Mammary epithelial cell (primary cell): ENCODE measurements at regions of chr2 and their contacts with region 1.

Region 1: DNA sequence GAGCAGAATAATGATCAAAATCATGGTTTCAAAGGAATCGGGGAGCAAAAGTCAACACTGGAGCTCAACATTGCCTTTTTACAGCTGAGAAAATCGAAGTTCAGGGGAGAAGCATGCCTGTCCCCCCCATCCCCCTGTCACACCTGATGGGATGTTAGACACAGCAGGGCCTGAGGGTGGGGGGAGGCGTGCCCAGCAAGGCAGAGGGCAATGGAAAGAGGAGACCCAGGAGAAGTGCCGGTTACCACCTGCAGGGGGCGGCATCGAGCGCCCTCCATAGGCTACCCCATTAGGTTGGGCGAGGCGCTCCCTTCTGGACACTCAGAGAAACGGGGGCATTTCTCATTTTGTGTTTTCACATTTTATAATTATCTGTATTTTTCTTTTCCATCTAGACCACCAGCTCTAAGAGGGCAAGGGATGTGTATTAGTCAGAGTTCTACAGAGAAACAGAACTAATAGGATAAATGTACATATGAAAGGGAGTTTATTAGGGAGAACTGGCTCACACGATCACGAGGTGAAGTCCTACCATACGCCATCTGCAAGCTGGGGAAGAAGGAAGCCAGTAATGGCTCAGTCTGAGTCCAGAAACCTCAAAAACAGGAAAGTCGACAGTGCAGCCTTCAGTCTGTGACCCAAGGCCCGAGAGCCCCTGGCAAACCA is 271.3 kb downstream of the LRATD1 start:
- DNase-seq: peak; percentile 41
- H3K4me3 ChIP-seq: no peak overlapping the region
- H3K27ac ChIP-seq: no peak overlapping the region
- H3K4me1 ChIP-seq: no peaks in the 10 kb centered on the region
- H3K27me3 ChIP-seq: no peaks in the 10 kb centered on the region
- CTCF ChIP-seq: peak; percentile 66 to 67

Region 2: GRCh38 chr2:14428056-14428455 is 475.8 kb before region 1 on chr2:
- CTCF ChIA-PET with region 1: no interaction called
- dilution Hi-C with region 1: no loop called
- in situ Hi-C with region 1: no loop called
- intact Hi-C with region 1: loop called (anchors 10 kb)
- DNase-seq: peak; percentile 64
- H3K4me3 ChIP-seq: no peak overlapping the region
- H3K27ac ChIP-seq: no peak overlapping the region
- H3K4me1 ChIP-seq: no peaks in the 10 kb centered on the region
- H3K27me3 ChIP-seq: no peaks in the 10 kb centered on the region
- CTCF ChIP-seq: peak in 1 of 2 donors; percentile 53

Region 3: DNA sequence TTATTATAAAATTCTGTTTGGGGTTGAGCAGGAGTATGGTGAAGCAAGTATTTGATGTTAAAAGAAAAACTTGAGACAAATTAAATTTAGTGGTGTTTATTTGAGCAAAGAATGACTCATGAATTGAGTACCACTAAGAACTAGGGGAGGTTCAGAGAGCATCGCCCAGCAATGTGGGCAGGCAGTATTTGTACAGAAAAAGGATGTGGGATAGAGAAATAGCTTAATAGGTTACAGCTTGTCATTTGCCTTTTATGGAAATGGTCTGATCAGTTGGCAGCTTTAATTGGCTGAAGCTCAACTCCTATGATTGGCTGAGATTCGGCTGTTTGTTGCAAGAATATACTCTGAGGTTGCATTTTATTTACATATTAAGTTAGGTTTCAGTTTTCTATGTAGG is 203.1 kb before region 1 on chr2:
- CTCF ChIA-PET with region 1: no interaction called
- dilution Hi-C with region 1: no loop called
- in situ Hi-C with region 1: no loop called
- intact Hi-C with region 1: loop called (anchors 10 kb)
- DNase-seq: peak; percentile 21
- H3K4me3 ChIP-seq: no peak overlapping the region
- H3K27ac ChIP-seq: no peak overlapping the region
- H3K4me1 ChIP-seq: no peaks in the 10 kb centered on the region
- H3K27me3 ChIP-seq: no peaks in the 10 kb centered on the region
- CTCF ChIP-seq: no peak

Region 4: DNA sequence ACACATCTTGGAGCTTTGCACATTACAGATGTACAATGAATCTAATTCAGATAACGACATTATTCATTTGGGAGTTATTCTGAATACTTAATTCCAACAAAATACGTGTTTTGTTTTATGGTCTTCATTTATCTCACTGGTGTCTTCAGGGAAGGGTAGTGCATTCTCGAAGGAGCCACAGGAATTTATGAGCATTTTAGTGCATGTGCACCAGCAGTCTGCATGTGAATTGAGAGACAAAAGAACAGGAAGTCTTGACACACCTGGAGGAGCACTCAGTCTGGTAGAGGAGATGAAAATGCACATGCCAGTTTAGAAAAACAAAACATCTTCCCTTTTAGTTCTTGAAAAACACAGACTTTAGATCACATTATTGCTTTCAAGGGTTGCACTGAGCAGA is 42.7 kb before region 1 on chr2:
- CTCF ChIA-PET with region 1: no interaction called
- dilution Hi-C with region 1: no loop called
- in situ Hi-C with region 1: no loop called
- intact Hi-C with region 1: no loop called
- DNase-seq: peak; percentile 11
- H3K4me3 ChIP-seq: no peak overlapping the region
- H3K27ac ChIP-seq: no peak overlapping the region
- H3K4me1 ChIP-seq: no peaks in the 10 kb centered on the region
- H3K27me3 ChIP-seq: no peaks in the 10 kb centered on the region
- CTCF ChIP-seq: no peak

Region 5: GRCh38 chr2:15577071-15577735 is 673.4 kb after region 1 on chr2:
- CTCF ChIA-PET with region 1: no interaction called
- dilution Hi-C with region 1: no loop called
- in situ Hi-C with region 1: no loop called
- intact Hi-C with region 1: loop called (anchors 2 kb)
- DNase-seq: peak; percentile 66
- H3K4me3 ChIP-seq: no peak overlapping the region
- H3K27ac ChIP-seq: no peak overlapping the region
- H3K4me1 ChIP-seq: peaks cover 5% of the 10 kb centered on the region
- H3K27me3 ChIP-seq: no peaks in the 10 kb centered on the region
- CTCF ChIP-seq: peak; percentile 91 to 94

Region 6: DNA sequence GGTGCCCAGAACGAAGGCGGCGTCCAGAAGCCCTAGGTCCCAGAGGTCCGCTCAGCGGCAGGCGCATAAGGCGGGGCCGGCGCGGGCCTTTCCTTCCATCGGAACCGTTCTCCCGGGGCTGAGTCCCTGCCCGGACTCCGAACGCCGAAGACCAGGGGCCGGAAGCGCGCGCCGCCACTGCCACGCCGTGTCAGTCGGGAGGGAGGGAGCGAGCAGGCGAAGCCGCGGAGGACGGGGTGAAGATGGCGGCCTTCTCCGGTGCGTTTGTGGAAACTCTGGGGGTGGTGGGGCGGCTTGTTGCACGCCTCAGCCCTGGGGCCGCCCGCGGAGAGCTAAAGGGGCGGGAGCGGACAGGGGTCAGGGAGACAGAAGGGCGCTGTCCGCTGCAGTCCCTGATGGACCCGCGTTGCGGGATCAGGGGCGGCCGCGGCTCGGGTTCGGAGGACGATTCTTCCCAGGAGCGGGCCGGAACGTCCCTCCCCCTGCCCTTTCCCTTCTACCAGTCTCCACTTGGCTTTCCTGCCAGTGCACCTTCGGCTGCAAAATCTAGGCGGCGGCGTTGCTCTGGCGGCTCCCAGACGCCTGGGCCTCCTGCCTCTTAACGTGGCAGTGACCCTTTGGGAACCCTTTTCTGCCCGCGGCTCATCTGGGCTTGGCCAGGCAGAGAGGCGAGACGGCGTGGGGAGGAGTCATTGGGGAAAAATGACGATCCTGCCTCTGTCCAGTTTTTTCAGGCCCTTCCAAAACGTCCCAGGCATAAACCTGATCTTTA is 688.0 kb after region 1 on chr2 and contains the start of gene DDX1:
- CTCF ChIA-PET with region 1: no interaction called
- dilution Hi-C with region 1: no loop called
- in situ Hi-C with region 1: no loop called
- intact Hi-C with region 1: loop called (anchors 1 kb)
- DNase-seq: peak; percentile 84
- H3K4me3 ChIP-seq: peak within 1 kb of the TSS; percentile 87 to 95 (median 87)
- H3K27ac ChIP-seq: peak within 1 kb of the TSS; percentile 79
- H3K4me1 ChIP-seq: peaks cover 6% of the 10 kb centered on the region
- H3K27me3 ChIP-seq: no peaks in the 10 kb centered on the region
- CTCF ChIP-seq: no peak
- total RNA-seq, gene DDX1: 47.2 to 107 TPM